Activated CD4-positive, alpha-beta T cell treated with anti-CD3 and anti-CD28 coated beads for 36 hours (primary cell): ENCODE measurements at regions of chr7 and their contacts with region 1.

Region 1: DNA sequence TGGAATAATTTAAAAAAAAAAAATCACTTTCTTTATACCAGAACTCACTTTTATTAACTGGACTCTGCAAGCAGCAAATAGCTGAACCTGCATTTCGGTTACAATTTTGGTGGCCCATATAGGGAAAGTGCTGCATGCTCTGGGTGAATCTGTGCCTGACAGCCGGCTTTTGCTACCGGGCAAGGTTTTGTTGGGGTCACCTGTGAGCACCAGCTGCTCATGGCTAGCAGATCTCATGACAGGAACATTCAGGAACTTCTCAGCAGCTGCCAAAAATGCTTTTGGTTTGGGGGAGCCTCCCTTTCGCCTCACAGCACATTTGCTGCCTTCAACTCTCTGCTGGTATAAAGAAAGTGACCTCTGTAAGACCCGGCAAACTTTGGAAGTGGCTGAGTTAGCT is 13.2 kb upstream of the CREB3L2 start:
- DNase-seq: no peak
- ATAC-seq: no peak
- H3K4me3 Mint-ChIP-seq: no peak overlapping the region
- H3K27ac Mint-ChIP-seq: no peak overlapping the region
- H3K4me1 Mint-ChIP-seq: no peaks in the 10 kb centered on the region
- H3K27me3 Mint-ChIP-seq: no peaks in the 10 kb centered on the region

Region 2: DNA sequence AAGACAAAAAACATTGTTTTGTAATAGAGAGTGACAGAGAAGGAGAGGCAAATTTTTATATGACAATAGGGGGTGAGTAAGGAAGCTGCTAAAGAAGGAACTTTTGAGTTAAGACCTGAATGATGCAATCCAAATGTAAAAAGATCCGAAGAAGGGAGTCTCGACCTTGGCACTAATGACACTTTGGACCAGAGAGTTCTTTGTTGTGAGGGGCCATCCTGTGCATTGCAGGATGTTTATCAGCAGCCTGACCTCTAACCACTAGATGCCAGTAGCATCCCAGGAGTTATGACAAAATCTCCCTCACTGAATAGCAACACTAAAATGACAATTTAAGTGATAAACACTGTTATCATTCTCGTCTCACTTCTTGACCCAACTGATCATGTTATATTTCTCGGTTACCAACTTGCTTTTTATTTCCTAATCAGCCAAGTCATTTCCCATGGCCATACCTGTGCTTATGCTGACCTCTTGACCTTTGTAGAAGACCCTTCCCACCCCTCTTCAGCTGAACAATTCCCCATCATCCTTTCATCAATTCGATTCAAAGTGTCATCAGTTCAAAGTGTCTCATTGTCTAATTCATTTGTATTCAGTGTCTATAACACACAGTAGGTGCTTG is 198.3 kb before region 1 on chr7:
- CTCF ChIA-PET with region 1: no interaction called
- POLR2A ChIA-PET with region 1: no interaction called
- intact Hi-C with region 1: loop called in 1 of 2 experiments (anchors 10 kb)
- DNase-seq: no peak
- ATAC-seq: no peak
- H3K4me3 Mint-ChIP-seq: no peak overlapping the region
- H3K27ac Mint-ChIP-seq: no peak overlapping the region
- H3K4me1 Mint-ChIP-seq: no peaks in the 10 kb centered on the region
- H3K27me3 Mint-ChIP-seq: peaks cover 24% of the 10 kb centered on the region